ENCODE measurements at regions of chr3 and their contacts with region 1.

Region 1: DNA sequence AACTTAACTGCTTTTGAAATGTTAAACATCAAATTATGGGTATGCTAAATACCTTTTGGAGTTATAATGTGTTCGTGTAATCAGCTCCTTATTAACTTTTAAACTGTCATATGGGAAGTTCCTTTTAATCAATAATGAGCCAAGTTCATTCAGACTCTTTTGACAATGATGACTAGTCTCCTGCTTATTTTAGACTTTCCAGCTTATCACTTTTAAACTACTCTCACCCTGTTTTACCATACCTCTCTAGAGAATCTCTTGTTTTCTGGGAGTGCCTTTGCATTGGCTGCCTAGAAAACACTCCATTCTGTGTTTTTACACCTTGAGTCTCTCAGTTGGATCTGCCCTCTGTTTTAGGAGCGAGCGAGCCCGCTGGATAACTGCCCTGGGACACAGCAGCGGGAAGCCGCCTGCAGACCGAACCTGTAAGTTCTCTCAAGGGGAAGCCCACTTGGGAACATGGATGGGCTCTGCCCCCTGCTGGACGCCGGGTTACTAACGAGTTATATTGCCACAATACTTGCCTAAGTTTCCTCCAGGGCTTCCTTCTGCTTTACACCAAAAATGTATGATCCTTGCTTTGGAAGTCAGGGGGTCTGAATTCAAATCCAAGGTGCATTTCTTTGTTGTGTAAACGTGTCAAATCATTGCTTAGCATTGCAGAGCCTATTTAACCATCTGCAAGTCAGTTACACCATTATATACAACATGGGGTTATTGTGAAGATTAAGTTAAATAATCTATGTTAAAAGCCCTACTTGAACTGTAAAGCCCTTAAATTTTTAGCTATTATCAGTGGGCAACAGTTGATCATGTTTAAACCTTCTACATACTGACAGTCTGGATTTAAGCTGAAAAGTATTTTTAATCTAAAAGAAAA is 71.3 kb downstream of the DHX36 start:
- DNase-seq: peak; percentile 2
- H3K4me3 ChIP-seq: peak overlapping the region in 2 of 4 donors; percentile 23 to 30
- H3K27ac ChIP-seq: no peak overlapping the region
- H3K4me1 ChIP-seq: peaks cover 0 to 10% (median 0%) of the 10 kb centered on the region in 3 donors
- H3K27me3 ChIP-seq: no peaks in the 10 kb centered on the region
- CTCF ChIP-seq: peak; percentile 49 to 94 (median 86)
- POLR2A ChIP-seq: no peak

Region 2: DNA sequence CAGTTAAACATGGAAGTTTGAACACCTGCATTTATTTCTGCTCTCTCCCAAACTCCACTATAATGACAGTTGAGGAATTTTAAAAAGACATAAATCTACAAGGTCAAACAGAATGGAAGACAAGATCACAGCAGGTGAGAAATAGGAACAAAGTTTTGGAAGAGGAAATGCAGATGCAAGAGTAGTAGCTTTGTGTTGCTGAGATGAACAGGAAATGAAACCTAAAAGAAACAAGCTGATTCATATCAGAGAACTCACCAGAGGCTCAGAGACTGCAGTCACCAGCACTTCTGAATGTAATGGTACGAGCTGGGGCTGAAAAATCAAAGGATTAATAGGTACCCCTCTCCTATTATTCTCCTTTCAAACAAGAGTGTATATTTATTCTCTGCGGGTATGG is 631.0 kb before region 1 on chr3:
- intact Hi-C with region 1: no loop called
- DNase-seq: no peak
- H3K4me3 ChIP-seq: no peak overlapping the region
- H3K27ac ChIP-seq: peak overlapping the region in 2 of 4 donors; percentile 21 to 54
- H3K4me1 ChIP-seq: peaks cover 0 to 14% (median 0%) of the 10 kb centered on the region in 3 donors
- H3K27me3 ChIP-seq: no peaks in the 10 kb centered on the region
- CTCF ChIP-seq: no peak
- POLR2A ChIP-seq: no peak

Region 3: DNA sequence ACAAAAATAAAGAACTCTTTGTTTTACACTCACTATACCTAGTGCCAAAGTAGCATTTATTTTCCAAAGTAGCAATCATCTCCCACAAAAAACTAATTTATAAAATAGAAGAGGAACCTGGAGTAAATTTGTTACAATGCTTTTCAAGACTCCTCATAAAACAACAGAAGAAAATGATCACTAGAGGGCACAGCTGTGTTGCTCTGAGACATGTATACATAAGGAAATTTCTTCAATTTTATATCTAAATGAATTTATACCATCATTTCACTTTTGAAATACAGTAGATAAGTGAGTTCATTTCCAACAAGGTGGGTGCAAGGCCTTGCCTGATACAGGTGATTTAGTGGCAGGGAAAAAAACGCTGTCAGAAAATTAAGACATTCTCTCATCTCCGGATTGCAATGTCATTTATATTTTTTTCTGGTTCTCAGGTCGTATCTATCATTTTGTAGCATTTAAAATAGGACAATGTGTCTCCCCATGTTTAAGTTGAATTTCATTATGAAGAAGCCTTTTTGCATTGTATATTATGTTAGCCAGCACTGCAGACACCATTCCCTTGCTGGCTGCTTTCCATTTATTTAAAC is 157.1 kb before region 1 on chr3:
- intact Hi-C with region 1: loop called (anchors 5 kb)
- DNase-seq: no peak
- H3K4me3 ChIP-seq: no peak overlapping the region
- H3K27ac ChIP-seq: no peak overlapping the region
- H3K4me1 ChIP-seq: no peaks in the 10 kb centered on the region
- H3K27me3 ChIP-seq: no peaks in the 10 kb centered on the region
- CTCF ChIP-seq: peak in 4 of 6 experiments; percentile 9 to 53 (median 26)
- POLR2A ChIP-seq: no peak